Cardiac septum (tissue), 1 donor: ENCODE measurements at regions of chr5 and their contacts with region 1.

Region 1: DNA sequence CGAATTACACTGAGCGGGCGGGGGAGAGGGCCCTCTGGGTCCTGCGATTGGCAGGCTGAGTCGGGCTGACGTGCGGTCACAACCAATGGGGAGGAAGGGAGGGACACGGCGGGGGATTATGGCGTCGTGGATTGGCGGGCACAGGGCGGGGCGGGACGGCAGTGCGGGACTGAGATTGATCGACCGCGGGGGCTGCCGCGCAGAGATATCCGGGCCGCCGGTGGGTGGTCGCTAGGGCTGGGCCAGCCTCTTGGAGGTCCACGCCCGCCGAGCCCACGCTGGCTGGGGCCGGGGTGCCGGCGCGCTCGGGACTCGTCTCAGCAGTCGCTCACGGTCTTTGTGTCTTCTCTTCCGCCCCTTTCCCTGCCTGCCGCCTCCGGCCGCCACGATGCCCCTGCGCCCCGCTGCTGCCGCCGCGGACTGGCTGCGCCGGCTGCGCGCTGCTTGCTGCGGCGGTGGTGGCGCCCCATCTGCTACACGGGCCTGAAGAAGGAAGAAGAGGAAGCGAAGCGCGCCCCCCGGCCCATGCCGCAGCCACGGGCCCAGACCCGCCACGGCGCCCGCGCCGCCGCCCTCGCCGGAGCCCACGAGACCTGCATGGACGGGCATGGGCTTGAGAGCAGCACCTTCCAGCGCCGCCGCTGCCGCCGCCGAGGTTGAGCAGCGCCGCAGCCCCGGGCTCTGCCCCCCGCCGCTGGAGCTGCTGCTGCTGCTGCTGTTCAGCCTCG is at the start of gene RGMB:
- DNase-seq: peak; percentile 97
- total RNA-seq, gene RGMB: 14.4 TPM

Region 2: GRCh38 chr5:97183100-97183929 is 1590.3 kb before region 1 on chr5 and contains the start of gene RIOK2:
- intact Hi-C with region 1: loop called (anchors 5 kb)
- DNase-seq: peak; percentile 95
- total RNA-seq, gene RIOK2: 19.2 TPM

Region 3: DNA sequence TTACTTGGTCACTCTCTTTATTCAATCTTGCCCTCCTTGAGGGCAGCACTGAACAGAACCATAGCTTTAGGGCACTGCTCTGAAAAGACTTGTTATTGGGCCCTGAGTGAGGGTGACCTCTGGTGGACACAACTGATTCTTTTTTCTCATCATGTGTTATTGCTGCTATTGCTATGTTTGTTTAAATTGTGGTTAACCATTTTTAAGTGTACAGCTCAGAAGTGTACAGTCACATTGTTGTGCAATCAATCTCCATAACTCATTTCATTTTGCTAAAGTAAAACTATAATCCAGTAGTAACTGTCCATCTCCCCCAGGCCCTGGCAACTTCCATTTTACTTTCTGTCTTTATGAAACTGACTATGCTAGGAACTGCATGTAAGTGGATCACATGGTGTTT is 1239.5 kb before region 1 on chr5:
- intact Hi-C with region 1: loop called (anchors 10 kb)
- DNase-seq: no peak

Region 4: GRCh38 chr5:97839341-97840081 is 934.1 kb before region 1 on chr5:
- intact Hi-C with region 1: loop called (anchors 10 kb)
- DNase-seq: no peak

Region 5: DNA sequence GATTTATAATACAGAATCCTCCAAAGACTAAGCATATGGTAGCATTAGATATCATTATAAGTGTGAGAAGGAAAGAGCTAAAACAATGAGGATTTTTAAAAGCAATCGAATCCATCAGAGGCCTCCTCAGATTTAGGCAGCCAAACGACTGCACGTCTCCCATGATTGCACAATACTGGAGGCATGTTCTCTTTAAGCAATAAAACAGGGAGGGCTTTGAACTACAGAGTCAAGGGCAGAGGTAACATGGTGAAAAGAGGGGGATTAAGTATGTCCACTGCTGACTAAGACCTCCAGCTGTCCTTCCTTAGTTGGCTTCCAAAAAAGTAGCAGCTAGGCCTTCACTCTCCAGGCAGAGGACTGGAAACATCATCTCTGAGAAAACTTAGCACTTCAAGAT is 298.8 kb before region 1 on chr5:
- intact Hi-C with region 1: no loop called
- DNase-seq: no peak

Region 6: DNA sequence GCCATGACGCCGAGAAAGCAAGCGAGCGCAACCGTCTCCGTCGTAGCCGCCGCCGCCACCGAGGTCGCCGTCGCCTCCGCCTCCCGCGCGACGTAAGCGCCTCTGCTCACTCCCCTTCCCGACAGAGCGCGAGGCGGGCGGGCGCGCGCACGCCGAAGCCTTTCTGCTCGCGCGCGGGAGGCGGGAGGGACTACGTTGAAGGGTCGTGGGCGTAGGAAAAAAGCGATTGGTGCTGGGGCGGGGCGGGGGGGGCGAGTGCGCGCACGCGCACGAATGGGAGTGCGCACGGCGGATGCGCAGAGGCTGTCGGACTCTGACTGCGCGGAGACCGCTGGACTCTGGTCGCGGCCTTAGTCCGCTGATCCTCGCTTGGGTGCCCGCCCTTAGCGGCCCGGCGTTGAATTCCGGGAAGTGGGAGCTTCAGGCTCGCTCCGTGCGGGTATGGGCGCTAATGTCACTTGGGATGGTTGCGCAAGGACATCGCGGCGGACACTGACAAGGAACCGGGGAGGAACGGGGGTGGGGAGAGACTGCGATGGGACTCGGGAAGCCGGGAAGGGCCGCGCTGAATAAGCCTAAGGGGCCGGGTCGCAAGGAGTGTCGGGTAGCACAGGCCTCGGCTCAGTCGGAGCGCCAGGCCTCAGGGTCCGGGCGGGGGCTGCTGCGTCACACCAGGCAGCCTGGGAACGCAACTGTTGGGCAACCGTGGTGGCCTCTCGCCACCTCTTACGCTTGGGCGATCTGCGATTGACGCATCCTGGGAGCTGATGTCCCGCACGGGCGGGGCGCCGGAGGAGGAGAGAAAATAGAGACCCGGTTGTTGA is 155.5 kb after region 1 on chr5 and contains the start of gene CHD1:
- intact Hi-C with region 1: loop called (anchors 1 kb)
- DNase-seq: peak; percentile 97
- total RNA-seq, gene CHD1: 16.8 TPM

Region 7: DNA sequence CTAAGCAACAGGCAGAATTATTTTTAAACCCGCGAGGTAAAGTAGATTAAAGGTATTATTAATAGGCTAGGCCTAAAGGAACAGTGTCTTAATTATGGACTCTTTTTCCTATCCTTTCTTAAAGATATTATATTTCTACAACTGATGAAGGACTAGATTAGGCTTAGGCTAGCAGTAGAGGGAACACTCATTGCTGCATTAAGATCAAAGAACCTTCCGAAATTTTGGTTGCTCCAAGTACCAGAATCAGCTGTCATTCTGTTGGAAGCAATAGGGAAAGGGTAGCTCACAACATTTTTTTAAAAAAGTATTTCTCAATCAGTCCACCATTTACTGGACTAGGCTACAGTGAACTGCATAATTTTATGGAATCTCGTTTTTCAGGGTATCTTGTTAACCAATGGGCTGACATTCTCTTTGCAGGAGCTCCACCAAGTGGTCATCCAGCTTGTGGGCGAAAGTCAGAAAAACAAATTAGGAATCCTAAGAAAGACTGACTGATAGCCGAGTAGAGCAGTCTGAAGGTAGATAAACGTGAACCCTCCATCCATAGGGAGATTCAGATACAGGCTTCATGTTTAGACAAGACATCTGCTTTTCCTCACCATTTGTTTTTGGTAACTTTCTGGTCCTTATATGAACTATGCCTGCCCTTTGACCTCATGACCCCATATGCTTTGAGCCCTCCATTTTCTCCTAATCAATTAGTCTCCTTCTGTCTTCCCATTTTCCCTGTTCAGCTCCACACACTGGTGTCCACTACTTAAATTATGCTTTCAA is 258.8 kb after region 1 on chr5:
- intact Hi-C with region 1: loop called (anchors 10 kb)
- DNase-seq: no peak